Esophagus squamous epithelium (tissue), 5 donors: ENCODE measurements at regions of chr7 and their contacts with region 1.

Region 1: GRCh38 chr7:89618274-89618673 is 536.0 kb upstream of the STEAP1 start:
- DNase-seq: no peak
- H3K4me3 ChIP-seq: no peak overlapping the region
- H3K27ac ChIP-seq: no peak overlapping the region
- H3K4me1 ChIP-seq: no peaks in the 10 kb centered on the region
- H3K27me3 ChIP-seq: no peaks in the 10 kb centered on the region
- CTCF ChIP-seq: no peak
- POLR2A ChIP-seq: no peak

Region 2: GRCh38 chr7:89549768-89550167 is 68.5 kb before region 1 on chr7:
- intact Hi-C with region 1: loop called (anchors 10 kb)
- DNase-seq: no peak
- H3K4me3 ChIP-seq: no peak overlapping the region
- H3K27ac ChIP-seq: no peak overlapping the region
- H3K4me1 ChIP-seq: no peaks in the 10 kb centered on the region
- H3K27me3 ChIP-seq: no peaks in the 10 kb centered on the region
- CTCF ChIP-seq: no peak
- POLR2A ChIP-seq: no peak